Dorsolateral prefrontal cortex (tissue), 120 donors: ENCODE measurements at regions of chr18 and their contacts with region 1.

Region 1: DNA sequence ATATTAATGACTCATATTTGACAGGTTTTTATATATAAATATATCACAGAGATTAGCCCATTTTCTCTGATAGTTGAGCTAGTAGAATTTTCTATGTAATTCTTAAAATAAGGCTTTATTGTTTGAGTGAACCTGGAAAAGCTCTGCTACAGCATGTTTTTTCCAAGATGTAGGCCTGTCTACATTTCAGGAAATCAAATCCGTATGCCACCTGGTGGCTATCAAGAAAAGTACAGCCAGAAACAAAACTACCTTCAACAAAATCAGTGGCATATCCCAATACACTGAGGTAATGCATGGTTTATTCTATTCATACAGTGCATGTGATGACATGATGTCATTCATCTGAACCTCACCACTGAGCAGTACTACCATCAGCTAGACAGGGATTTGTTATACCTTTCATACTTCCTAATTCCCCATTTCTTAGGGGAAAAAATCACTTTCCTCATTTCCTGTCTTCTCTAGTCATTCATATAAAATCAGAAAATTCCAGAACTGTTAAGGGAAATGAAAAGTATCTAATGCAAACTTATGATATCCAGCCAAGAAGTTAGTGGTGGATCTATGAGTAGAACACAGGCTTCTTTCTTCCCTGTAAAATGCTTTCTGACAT is 310.4 kb upstream of the SYT4 start:
- DNase-seq: peak in 1 of 10 donors; percentile 35
- H3K4me3 ChIP-seq: no peak overlapping the region
- H3K27ac ChIP-seq: no peak overlapping the region
- H3K27me3 ChIP-seq: no peaks in the 10 kb centered on the region
- CTCF ChIP-seq: peak; percentile 68 to 97 (median 83)

Region 2: GRCh38 chr18:42053188-42053781 is 1534.4 kb before region 1 on chr18:
- intact Hi-C with region 1: loop called in 1 of 2 experiments (anchors 10 kb)
- DNase-seq: peak in 7 of 10 donors; percentile 35 to 72 (median 48)
- H3K4me3 ChIP-seq: peak overlapping the region in 23 of 59 donors; percentile 6 to 42 (median 28)
- H3K27ac ChIP-seq: peak overlapping the region in 8 of 59 donors; percentile 6 to 64 (median 28)
- H3K27me3 ChIP-seq: no peaks in the 10 kb centered on the region
- CTCF ChIP-seq: peak; percentile 79 to 99 (median 92)

Region 3: GRCh38 chr18:43471873-43472272 is 115.8 kb before region 1 on chr18:
- intact Hi-C with region 1: no loop called
- DNase-seq: no peak
- H3K4me3 ChIP-seq: no peak overlapping the region
- H3K27ac ChIP-seq: no peak overlapping the region
- H3K27me3 ChIP-seq: peaks cover 0 to 2% (median 0%) of the 10 kb centered on the region in 45 donors
- CTCF ChIP-seq: no peak

Region 4: DNA sequence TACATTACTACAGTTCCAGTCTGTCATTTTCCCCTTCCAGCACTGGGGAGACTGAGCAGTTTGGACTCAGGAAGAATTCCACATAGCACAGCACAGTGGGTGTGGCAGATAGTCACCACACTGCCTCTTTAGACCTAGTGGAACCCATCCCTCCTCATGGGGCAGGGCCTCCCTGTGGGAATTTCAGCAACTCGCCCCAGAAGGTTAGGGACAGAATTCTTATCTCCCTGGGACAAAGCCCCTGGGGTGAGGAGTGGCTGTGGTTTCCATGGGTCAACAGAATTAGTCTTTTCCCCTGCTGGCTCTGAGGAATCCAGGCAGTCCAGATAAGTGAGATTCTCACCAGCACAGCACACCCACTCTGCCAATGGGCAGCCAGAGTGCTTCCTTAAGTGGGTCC is 131.7 kb after region 1 on chr18:
- intact Hi-C with region 1: no loop called
- DNase-seq: no peak
- H3K4me3 ChIP-seq: no peak overlapping the region
- H3K27ac ChIP-seq: no peak overlapping the region
- H3K27me3 ChIP-seq: peaks cover 0 to 7% (median 0%) of the 10 kb centered on the region in 45 donors
- CTCF ChIP-seq: no peak